ENCODE measurements at regions of chr11 and their contacts with region 1.

Region 1: DNA sequence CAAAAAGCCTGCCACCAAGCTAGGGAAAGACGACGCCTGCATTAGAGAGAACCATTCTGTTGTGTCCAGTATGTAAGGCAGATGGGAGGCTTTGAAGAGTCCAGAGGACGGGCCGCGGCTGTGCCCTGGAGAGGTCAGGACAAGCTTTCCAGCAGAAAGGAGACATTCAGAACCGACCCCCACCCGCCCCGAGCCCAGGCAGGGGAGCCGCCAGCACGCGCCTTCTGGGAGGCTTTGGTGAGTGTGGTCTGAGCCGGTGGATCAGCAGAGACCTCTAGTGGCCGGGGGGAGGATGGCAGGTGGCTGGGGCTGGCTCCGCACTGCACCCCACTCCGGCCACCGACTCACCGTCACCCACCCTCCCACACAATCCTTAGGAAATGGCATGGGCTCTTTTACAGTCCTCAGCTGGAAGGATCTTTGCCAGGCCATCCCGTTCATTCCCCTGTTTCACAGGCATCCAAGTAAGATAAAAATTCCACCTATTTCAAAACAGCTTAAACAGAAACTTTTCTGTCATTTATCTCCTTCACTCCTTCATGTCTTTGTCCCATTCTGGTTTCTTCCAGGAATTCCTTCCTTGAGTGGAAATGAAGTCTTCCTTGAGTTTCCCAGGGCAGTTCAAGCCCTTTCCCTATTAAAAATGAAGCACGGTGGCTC is 91.2 kb downstream of the FEZ1 start:
- DNase-seq: peak in 1 of 2 experiments; percentile 97
- H3K4me3 ChIP-seq: no peak overlapping the region
- H3K27ac ChIP-seq: no peak overlapping the region
- H3K4me1 ChIP-seq: peaks cover 12 to 29% (median 17%) of the 10 kb centered on the region in 4 experiments
- H3K27me3 ChIP-seq: peaks cover 0 to 4% (median under 1%) of the 10 kb centered on the region in 4 experiments; a peak in 2 of 7 replicates
- CTCF ChIP-seq: peak; percentile 94 to 98 (median 96)
- EP300 ChIP-seq: no peak
- POLR2A ChIP-seq: no peak
- RAD21 ChIP-seq: peak; percentile 93 to 98

Region 2: GRCh38 chr11:125075849-125076317 is 329.0 kb before region 1 on chr11:
- CTCF ChIA-PET with region 1: interaction called, 12 read pairs
- POLR2A ChIA-PET with region 1: no interaction called
- DNase-seq: peak in 1 of 2 experiments; percentile 44
- H3K4me3 ChIP-seq: no peak overlapping the region
- H3K27ac ChIP-seq: no peak overlapping the region
- H3K4me1 ChIP-seq: peaks cover 0 to 5% (median 0%) of the 10 kb centered on the region in 4 experiments; a peak in 2 of 7 replicates
- H3K27me3 ChIP-seq: no peaks in the 10 kb centered on the region; a peak in 1 of 7 replicates
- CTCF ChIP-seq: peak; percentile 31 to 62 (median 47)
- EP300 ChIP-seq: no peak
- POLR2A ChIP-seq: no peak
- RAD21 ChIP-seq: 0 out of 4 replicates have a peak, but pooled peaks of 1 of the 2 experiments have one; percentile 10

Region 3: GRCh38 chr11:125224391-125225010 is 180.4 kb before region 1 on chr11:
- CTCF ChIA-PET with region 1: interaction called, 10 read pairs
- POLR2A ChIA-PET with region 1: no interaction called
- DNase-seq: no peak
- H3K4me3 ChIP-seq: no peak overlapping the region
- H3K27ac ChIP-seq: peak overlapping the region; percentile 17; the same call in 1 of the 2 replicates
- H3K4me1 ChIP-seq: peaks cover 7 to 26% (median 18%) of the 10 kb centered on the region in 4 experiments
- H3K27me3 ChIP-seq: no peaks in the 10 kb centered on the region; a peak in 1 of 7 replicates
- CTCF ChIP-seq: peak; percentile 27 to 40 (median 34); a peak in 3 of 4 replicates
- EP300 ChIP-seq: no peak
- POLR2A ChIP-seq: no peak
- RAD21 ChIP-seq: peak; percentile 40 to 48

Region 4: GRCh38 chr11:125376117-125376516 is 28.8 kb before region 1 on chr11:
- CTCF ChIA-PET with region 1: interaction called, 66 read pairs
- POLR2A ChIA-PET with region 1: interaction called, 6 read pairs
- DNase-seq: no peak
- H3K4me3 ChIP-seq: no peak overlapping the region
- H3K27ac ChIP-seq: no peak overlapping the region
- H3K4me1 ChIP-seq: peaks cover 12 to 25% (median 22%) of the 10 kb centered on the region in 4 experiments
- H3K27me3 ChIP-seq: peaks cover 0 to 4% (median 0%) of the 10 kb centered on the region in 4 experiments; a peak in 2 of 7 replicates
- CTCF ChIP-seq: no peak
- EP300 ChIP-seq: no peak
- POLR2A ChIP-seq: no peak
- RAD21 ChIP-seq: no peak

Region 5: GRCh38 chr11:125382314-125382791 is 22.6 kb before region 1 on chr11:
- CTCF ChIA-PET with region 1: interaction called, 12 read pairs
- POLR2A ChIA-PET with region 1: no interaction called
- DNase-seq: no peak
- H3K4me3 ChIP-seq: no peak overlapping the region
- H3K27ac ChIP-seq: no peak overlapping the region
- H3K4me1 ChIP-seq: peaks cover 0 to 9% (median 0%) of the 10 kb centered on the region in 4 experiments; a peak in 3 of 7 replicates
- H3K27me3 ChIP-seq: no peaks in the 10 kb centered on the region; a peak in 1 of 7 replicates
- CTCF ChIP-seq: no peak
- EP300 ChIP-seq: no peak
- POLR2A ChIP-seq: no peak
- RAD21 ChIP-seq: no peak

Region 6: GRCh38 chr11:125390946-125391345 is 14.0 kb before region 1 on chr11:
- CTCF ChIA-PET with region 1: interaction called, 19 read pairs
- POLR2A ChIA-PET with region 1: interaction called, 3 read pairs
- DNase-seq: no peak
- H3K4me3 ChIP-seq: no peak overlapping the region
- H3K27ac ChIP-seq: no peak overlapping the region
- H3K4me1 ChIP-seq: peaks cover 0 to 9% (median 7%) of the 10 kb centered on the region in 4 experiments; a peak in 6 of 7 replicates
- H3K27me3 ChIP-seq: no peaks in the 10 kb centered on the region
- CTCF ChIP-seq: no peak
- EP300 ChIP-seq: no peak
- POLR2A ChIP-seq: no peak
- RAD21 ChIP-seq: no peak